ENCODE measurements at regions of chr16 and their contacts with region 1.

Region 1: GRCh38 chr16:85420501-85421337 is 192.4 kb upstream of the GSE1 start:
- DNase-seq: peak; percentile 72
- H3K4me3 ChIP-seq: no peak overlapping the region
- H3K27ac ChIP-seq: no peak overlapping the region
- H3K4me1 ChIP-seq: peaks cover 0 to 21% (median 19%) of the 10 kb centered on the region in 4 donors
- H3K27me3 ChIP-seq: no peaks in the 10 kb centered on the region
- CTCF ChIP-seq: peak; percentile 92 to 99 (median 98)
- EP300 ChIP-seq: no peak
- POLR2A ChIP-seq: no peak

Region 2: DNA sequence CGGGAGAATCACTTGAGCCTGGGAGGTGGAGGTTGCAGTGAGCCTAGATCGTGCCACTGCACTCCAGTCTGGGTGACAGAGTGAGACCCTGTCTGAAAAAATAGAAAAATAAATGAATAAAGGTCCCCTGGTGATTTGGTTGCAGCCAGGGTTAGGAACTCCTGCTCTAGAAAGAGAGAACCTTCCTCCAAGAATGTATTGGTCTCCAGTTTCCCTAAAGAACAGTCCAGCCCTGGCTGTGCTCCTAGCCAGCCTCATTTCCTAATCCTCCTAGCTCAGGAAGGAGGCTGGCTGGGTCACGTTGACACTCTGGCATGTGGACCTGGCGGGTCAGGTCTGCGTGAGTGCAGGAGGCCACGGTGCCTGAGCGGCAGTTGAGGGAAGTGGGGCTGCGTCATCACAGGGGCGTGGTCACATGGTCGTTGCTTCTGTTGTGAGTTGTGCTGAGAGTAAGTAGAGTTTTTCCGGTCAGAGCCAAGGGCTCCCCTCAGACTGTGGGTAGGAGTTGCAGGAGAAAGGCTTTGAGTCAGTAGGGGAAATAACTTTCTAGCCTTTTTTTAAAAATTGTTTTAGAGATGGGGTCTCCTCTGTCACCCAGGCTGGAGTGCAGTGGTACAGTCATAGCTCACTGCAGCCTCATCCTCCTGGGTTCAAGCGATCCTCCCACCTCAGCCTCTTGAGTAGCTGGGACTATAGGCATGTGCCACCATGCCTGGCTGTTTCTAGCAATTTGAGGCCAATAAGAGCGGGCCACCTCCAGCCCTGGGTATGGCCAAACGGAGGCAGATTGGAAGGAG is 114.5 kb before region 1 on chr16:
- intact Hi-C with region 1: loop called (anchors 5 kb)
- DNase-seq: peak; percentile 96
- H3K4me3 ChIP-seq: no peak overlapping the region
- H3K27ac ChIP-seq: peak overlapping the region in 3 of 4 donors; percentile 8 to 46 (median 45)
- H3K4me1 ChIP-seq: peaks cover 0 to 63% (median 39%) of the 10 kb centered on the region in 4 donors
- H3K27me3 ChIP-seq: no peaks in the 10 kb centered on the region
- CTCF ChIP-seq: no peak
- EP300 ChIP-seq: no peak
- POLR2A ChIP-seq: no peak

Region 3: DNA sequence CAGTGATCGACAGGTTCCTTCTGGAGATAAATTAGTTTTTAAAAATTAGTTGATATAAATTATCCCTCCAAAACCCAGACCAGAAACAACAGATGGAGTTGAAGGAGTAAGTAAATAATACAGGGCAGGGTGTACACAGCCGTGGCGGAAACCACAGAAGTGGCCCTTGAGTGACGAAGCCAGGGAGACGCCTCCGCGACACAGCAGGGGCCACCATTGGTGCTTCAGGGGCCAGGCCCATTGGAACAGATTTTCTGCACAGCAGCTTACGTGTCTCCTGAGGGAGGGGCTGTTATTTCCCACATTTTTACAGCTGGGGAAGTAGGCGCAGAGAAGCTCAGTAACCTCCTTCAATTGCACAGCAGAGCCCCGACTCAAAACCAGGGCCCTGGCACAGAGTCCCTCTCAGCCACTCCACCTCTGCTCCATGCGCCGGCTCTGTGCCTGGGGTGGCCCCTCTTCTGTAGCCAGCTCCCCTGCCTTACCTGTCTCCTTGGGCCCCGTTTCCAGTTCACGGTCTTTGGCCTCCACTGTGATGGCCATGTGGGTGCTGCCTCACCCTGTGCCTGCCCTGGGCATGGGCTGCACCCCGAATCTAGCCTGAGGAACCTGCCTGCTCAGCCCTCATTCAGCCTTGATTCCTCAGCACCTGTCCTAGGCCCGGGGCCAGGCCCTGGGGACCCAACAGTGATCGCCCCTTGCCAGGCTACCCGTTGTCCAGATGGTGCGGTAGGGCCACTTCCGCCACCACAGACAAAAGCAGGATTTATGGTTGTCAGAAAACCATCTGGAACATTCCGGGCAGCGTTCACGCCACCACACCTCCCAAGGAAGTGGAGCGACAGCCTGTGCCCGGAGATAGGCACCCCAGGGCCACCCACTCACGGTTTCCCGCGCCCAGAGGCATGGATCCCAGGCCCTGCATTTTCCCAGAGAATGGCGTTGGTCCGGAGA is 63.9 kb after region 1 on chr16:
- intact Hi-C with region 1: loop called (anchors 5 kb)
- DNase-seq: no peak
- H3K4me3 ChIP-seq: no peak overlapping the region
- H3K27ac ChIP-seq: no peak overlapping the region
- H3K4me1 ChIP-seq: no peaks in the 10 kb centered on the region
- H3K27me3 ChIP-seq: no peaks in the 10 kb centered on the region
- CTCF ChIP-seq: no peak
- EP300 ChIP-seq: no peak
- POLR2A ChIP-seq: no peak

Region 4: GRCh38 chr16:85554112-85554813 is 133.5 kb after region 1 on chr16:
- intact Hi-C with region 1: loop called (anchors 5 kb)
- DNase-seq: peak; percentile 88
- H3K4me3 ChIP-seq: peak overlapping the region; percentile 62 to 87 (median 80)
- H3K27ac ChIP-seq: peak overlapping the region; percentile 84 to 96 (median 94)
- H3K4me1 ChIP-seq: peaks cover 0 to 58% (median 45%) of the 10 kb centered on the region in 4 donors
- H3K27me3 ChIP-seq: no peaks in the 10 kb centered on the region
- CTCF ChIP-seq: no peak
- EP300 ChIP-seq: no peak
- POLR2A ChIP-seq: peak in 1 of 2 donors; percentile 26

Region 5: GRCh38 chr16:85947230-85948137 is 526.8 kb after region 1 on chr16:
- intact Hi-C with region 1: no loop called
- DNase-seq: no peak
- H3K4me3 ChIP-seq: peak overlapping the region in 1 of 4 donors; percentile 1
- H3K27ac ChIP-seq: no peak overlapping the region
- H3K4me1 ChIP-seq: no peaks in the 10 kb centered on the region
- H3K27me3 ChIP-seq: peaks cover 0 to 4% (median 0%) of the 10 kb centered on the region in 3 donors
- CTCF ChIP-seq: no peak
- EP300 ChIP-seq: no peak
- POLR2A ChIP-seq: no peak

Measured in sigmoid colon (tissue), 7 donors.